ENCODE measurements at regions of chr17 and their contacts with region 1.

Region 1: GRCh38 chr17:4004517-4005295 is 40.5 kb upstream of the ATP2A3 start:
- DNase-seq: peak in 1 of 2 experiments; percentile 88
- H3K4me3 ChIP-seq: no peak overlapping the region
- H3K27ac ChIP-seq: no peak overlapping the region
- H3K4me1 ChIP-seq: peaks cover 0 to 16% (median 9%) of the 10 kb centered on the region in 4 experiments; a peak in 6 of 7 replicates
- H3K27me3 ChIP-seq: no peaks in the 10 kb centered on the region
- CTCF ChIP-seq: peak; percentile 86 to 96 (median 89)
- EP300 ChIP-seq: no peak
- POLR2A ChIP-seq: no peak
- RAD21 ChIP-seq: peak; percentile 91 to 97

Region 2: DNA sequence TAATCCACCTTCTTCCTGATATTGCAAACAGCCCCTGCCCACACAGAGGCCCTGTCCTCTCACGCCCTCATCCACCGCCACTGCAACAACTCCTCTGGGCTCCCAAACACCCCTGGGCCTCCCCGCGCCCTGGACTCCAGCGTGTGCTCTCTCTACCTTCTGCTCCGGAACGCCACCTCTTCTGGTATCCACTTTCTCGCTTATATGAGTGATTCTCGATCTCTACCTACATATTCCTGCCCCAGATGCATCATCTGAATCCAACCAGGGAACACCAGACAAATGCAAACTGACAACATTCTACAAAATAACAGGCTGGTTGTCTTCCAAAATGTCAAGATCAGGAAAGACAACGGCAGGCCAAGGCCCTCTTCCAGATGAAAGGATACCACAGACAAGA is 130.8 kb before region 1 on chr17:
- CTCF ChIA-PET with region 1: no interaction called
- POLR2A ChIA-PET with region 1: no interaction called
- DNase-seq: no peak
- H3K4me3 ChIP-seq: no peak overlapping the region
- H3K27ac ChIP-seq: no peak overlapping the region
- H3K4me1 ChIP-seq: no peaks in the 10 kb centered on the region
- H3K27me3 ChIP-seq: no peaks in the 10 kb centered on the region
- CTCF ChIP-seq: no peak
- EP300 ChIP-seq: no peak
- POLR2A ChIP-seq: no peak
- RAD21 ChIP-seq: no peak

Region 3: DNA sequence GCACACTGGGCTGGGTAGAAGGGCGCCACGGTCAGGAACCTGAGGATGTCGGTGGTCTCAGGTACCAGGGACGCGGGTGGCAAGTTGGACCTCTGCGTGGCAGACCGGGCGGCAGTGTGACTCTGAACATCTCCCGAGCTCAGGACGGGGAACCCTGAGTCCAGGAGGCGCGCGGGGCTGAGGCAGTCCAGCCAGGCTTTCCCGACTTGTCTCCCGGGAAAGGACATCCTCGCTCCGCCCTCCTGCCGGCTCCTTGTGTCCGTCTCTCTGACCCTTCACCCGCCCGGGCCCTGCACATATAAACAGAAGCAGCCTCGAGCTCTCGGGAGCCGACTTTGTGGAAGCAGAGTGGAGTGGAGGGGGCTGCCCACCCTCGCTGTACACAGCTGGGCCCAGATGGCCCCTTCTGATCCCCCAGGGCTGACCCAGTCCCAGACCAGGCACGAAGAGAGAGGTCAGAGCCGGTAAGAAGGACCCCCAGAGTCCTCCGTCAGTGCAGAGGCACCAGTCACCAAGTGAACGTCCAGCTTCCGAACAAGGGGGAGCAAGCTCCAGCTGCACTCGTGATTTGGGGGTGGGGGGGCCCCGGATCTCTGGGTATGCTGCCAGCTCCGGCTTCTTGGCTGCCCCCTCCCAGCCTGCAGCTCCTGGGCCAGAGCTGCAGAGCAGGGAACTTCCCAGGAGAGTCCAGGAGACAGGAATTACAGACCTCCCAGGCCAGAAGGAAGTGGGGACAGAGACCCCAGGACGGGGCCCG is 80.0 kb before region 1 on chr17:
- CTCF ChIA-PET with region 1: interaction called, 14 read pairs
- POLR2A ChIA-PET with region 1: interaction called, 5 read pairs
- DNase-seq: no peak
- H3K4me3 ChIP-seq: no peak overlapping the region
- H3K27ac ChIP-seq: no peak overlapping the region
- H3K4me1 ChIP-seq: peaks cover 0 to 3% (median 0%) of the 10 kb centered on the region in 4 experiments; a peak in 3 of 7 replicates
- H3K27me3 ChIP-seq: no peaks in the 10 kb centered on the region
- CTCF ChIP-seq: no peak
- EP300 ChIP-seq: no peak
- POLR2A ChIP-seq: no peak
- RAD21 ChIP-seq: no peak

Region 4: GRCh38 chr17:3935140-3935542 is 69.6 kb before region 1 on chr17:
- CTCF ChIA-PET with region 1: interaction called, 102 read pairs
- POLR2A ChIA-PET with region 1: interaction called, 5 read pairs
- DNase-seq: peak; percentile 44 to 80
- H3K4me3 ChIP-seq: no peak overlapping the region
- H3K27ac ChIP-seq: no peak overlapping the region
- H3K4me1 ChIP-seq: no peaks in the 10 kb centered on the region
- H3K27me3 ChIP-seq: no peaks in the 10 kb centered on the region
- CTCF ChIP-seq: peak; percentile 92 to 94 (median 92)
- EP300 ChIP-seq: peak in 1 of 2 experiments; percentile 62; a peak in 1 of 3 replicates
- POLR2A ChIP-seq: no peak
- RAD21 ChIP-seq: peak; percentile 92 to 94

Region 5: GRCh38 chr17:3944485-3945388 is 60.0 kb before region 1 on chr17:
- CTCF ChIA-PET with region 1: interaction called, 12 read pairs
- POLR2A ChIA-PET with region 1: no interaction called
- DNase-seq: peak; percentile 50 to 97
- H3K4me3 ChIP-seq: peak overlapping the region; percentile 35 to 65 (median 44)
- H3K27ac ChIP-seq: no peak overlapping the region
- H3K4me1 ChIP-seq: peaks cover 0 to 8% (median 1%) of the 10 kb centered on the region in 4 experiments; a peak in 2 of 7 replicates
- H3K27me3 ChIP-seq: peaks cover 0 to 5% (median 3%) of the 10 kb centered on the region in 4 experiments; a peak in 3 of 7 replicates
- CTCF ChIP-seq: no peak
- EP300 ChIP-seq: no peak
- POLR2A ChIP-seq: no peak
- RAD21 ChIP-seq: no peak

Region 6: GRCh38 chr17:3965118-3965803 is 39.4 kb before region 1 on chr17:
- CTCF ChIA-PET with region 1: interaction called, 11 read pairs
- POLR2A ChIA-PET with region 1: interaction called, 5 read pairs
- DNase-seq: peak in 1 of 2 experiments; percentile 80
- H3K4me3 ChIP-seq: peak overlapping the region; percentile 22 to 80 (median 56)
- H3K27ac ChIP-seq: no peak overlapping the region
- H3K4me1 ChIP-seq: peaks cover 3 to 18% (median 10%) of the 10 kb centered on the region in 4 experiments
- H3K27me3 ChIP-seq: peaks cover 2 to 27% (median 15%) of the 10 kb centered on the region in 4 experiments; a peak in 6 of 7 replicates
- CTCF ChIP-seq: no peak
- EP300 ChIP-seq: no peak
- POLR2A ChIP-seq: no peak
- RAD21 ChIP-seq: peak in 1 of 2 experiments; percentile 20; a peak in 1 of 4 replicates

Region 7: GRCh38 chr17:3993493-3994220 is 11.0 kb before region 1 on chr17:
- CTCF ChIA-PET with region 1: interaction called, 12 read pairs
- POLR2A ChIA-PET with region 1: no interaction called
- DNase-seq: no peak
- H3K4me3 ChIP-seq: no peak overlapping the region
- H3K27ac ChIP-seq: no peak overlapping the region
- H3K4me1 ChIP-seq: no peaks in the 10 kb centered on the region; a peak in 1 of 7 replicates
- H3K27me3 ChIP-seq: no peaks in the 10 kb centered on the region
- CTCF ChIP-seq: no peak
- EP300 ChIP-seq: no peak
- POLR2A ChIP-seq: no peak
- RAD21 ChIP-seq: no peak

Region 8: DNA sequence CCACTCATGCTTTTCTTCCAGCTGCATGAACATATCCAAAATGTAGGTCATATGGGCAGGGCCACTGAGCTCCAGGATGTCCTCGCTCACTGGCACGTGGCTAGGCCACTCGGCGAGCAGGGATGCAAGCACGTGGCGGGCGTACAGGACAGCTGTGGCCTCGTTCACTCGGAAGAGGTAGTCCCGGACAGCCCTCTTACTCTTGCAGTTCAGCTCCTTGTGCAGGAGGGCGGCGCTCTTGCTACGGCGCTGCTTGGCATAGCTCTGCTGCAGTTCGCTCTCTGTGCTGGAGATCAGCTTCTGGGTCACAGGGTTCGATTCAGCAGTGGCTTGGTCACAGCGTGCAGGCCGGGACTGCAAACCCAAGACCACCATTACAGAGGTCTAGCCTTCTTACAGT is 12.7 kb after region 1 on chr17:
- CTCF ChIA-PET with region 1: interaction called, 59 read pairs
- POLR2A ChIA-PET with region 1: no interaction called
- DNase-seq: peak in 1 of 2 experiments; percentile 61
- H3K4me3 ChIP-seq: no peak overlapping the region
- H3K27ac ChIP-seq: no peak overlapping the region
- H3K4me1 ChIP-seq: no peaks in the 10 kb centered on the region
- H3K27me3 ChIP-seq: no peaks in the 10 kb centered on the region
- CTCF ChIP-seq: peak; percentile 39 to 69 (median 69); a peak in 3 of 4 replicates
- EP300 ChIP-seq: no peak
- POLR2A ChIP-seq: no peak
- RAD21 ChIP-seq: peak; percentile 31; a peak in 3 of 4 replicates

Measured in H1 (cell line).